ENCODE measurements at regions of chr17 and their contacts with region 1.

Region 1: GRCh38 chr17:76523084-76524037 is 14.1 kb downstream of the CYGB start:
- DNase-seq: peak; percentile 86
- CTCF ChIP-seq: peak; percentile 99

Region 2: GRCh38 chr17:76048711-76049110 is 474.6 kb before region 1 on chr17:
- in situ Hi-C with region 1: no loop called
- DNase-seq: no peak
- CTCF ChIP-seq: no peak

Region 3: DNA sequence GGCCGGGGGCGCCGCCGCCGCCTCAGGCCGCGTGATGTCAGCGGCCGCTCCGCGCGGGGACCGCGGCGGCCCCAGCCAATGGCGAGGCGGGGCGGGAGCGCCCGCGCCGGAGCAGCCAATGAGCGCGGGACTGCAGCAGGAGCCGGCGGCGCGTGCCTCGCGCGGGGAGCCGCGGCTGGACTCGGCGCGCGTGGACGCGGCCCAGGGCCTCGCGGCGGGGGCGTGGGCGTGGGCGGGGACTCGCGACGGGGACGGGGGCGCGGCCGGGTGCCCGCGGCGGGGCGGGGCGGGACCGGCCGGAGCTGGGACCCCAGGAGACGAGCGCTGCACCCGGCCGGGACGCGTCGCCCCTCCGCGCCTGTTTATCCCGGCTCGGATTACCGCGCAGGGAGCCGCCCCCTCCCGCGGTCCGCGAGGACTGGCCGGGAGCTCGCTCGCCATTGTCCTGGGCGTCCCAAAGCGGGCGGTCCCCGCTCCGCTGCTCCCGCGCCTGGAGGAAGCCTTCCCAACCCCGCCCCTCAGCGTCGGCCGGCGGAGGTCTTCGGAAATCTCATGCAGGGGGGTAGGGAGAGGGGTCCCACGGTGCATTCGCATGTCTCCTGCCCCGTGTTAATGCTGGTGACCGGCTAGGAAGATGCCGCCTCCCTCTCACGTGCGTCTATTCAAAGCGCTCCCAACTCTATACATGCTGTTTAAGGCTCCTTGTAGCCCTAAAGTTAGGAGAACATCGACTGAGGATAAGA is 282.7 kb before region 1 on chr17 and contains the start of gene RNF157:
- in situ Hi-C with region 1: no loop called
- DNase-seq: peak; percentile 89
- CTCF ChIP-seq: no peak

Region 4: DNA sequence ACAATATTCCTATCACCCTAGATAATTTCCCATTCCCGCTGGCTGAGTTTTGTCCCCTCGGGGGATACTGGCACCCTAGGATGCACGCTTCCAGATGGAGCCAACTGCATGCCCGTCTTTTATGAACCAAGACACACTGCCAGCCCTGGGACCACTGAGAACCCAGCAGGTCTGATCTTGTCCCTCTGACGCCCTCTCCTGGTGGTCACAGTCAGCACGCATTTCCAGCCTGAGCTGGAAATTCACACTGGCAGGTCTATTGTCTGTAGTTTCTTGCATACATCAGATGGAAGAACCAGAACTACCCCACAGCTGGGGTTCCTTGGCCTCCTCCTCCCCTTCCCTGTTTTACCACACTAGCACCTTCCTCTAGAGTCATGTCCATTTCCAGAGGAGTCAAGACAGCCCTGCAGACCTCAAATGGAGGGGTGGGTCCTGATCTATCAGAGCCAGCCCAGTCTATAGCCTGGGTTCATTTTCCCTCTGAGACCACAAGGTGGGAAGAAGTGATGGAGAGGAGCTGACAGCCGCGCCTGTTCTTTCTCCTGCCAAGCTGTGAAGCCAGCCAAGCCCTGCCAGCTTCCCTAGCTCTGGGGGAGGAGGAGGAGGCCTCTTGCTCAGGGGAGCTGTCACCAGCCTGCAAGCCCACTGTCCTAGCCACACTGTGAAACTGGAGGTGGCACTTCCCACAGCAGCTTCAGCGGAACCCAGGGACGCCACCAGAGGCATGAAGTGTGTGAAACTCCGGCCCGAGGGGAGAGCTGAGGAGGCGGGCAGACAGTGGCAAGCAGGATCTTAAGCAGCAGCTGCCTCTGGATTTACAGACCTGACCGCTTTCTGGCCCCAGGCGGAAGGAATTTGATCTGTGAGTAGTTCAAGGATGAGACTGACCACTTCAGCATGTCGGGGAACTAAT is 158.1 kb after region 1 on chr17:
- in situ Hi-C with region 1: loop called (anchors 10 kb)
- DNase-seq: peak; percentile 79
- CTCF ChIP-seq: peak; percentile 88

Measured in GM13977 (cell line).